ENCODE measurements at regions of chr15 and their contacts with region 1.

Region 1: DNA sequence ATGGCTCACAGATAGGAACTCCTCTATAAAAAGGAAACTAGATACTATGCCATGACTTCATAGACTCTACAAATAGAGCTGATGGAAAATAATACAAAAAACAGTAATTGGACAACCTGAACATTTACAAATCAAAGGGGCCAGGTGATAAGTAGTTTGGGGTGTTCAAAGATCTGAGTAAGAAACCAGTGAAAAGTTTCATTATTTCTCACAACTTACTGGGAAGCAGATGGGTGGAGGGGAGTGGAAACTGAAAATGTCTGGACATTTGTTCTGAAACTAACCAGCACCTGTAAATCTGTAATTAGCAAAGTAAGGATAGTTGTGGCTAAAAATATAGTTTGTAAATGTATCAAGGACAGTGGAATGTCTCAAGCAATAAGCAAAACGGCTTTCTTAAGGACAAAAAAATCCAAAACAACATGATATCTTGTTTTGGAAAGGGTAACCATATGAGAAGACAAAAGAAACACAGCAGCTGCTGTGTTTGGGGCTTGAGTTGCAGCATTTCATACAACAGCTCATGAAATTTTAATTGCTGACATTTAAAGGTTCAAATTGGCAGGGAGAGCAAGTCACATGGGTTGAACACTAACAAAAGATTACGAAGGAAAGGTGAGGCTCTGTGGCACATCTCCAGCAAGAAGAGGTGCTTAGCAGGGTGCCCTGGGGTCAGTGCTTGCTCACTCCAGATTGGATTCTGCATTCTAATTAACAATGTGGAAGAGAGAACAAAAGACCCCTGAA is 26.8 kb upstream of the THBS1 start:
- DNase-seq: peak; percentile 78
- H3K4me3 Mint-ChIP-seq: peak overlapping the region; percentile 22
- H3K27ac Mint-ChIP-seq: peak overlapping the region; percentile 50
- H3K4me1 Mint-ChIP-seq: peaks cover 39% of the 10 kb centered on the region
- H3K27me3 Mint-ChIP-seq: no peaks in the 10 kb centered on the region
- CTCF ChIP-seq: no peak

Region 2: GRCh38 chr15:39327005-39327730 is 227.0 kb before region 1 on chr15:
- CTCF ChIA-PET with region 1: no interaction called
- POLR2A ChIA-PET with region 1: no interaction called
- intact Hi-C with region 1: no loop called
- DNase-seq: no peak
- H3K4me3 Mint-ChIP-seq: no peak overlapping the region
- H3K27ac Mint-ChIP-seq: no peak overlapping the region
- H3K4me1 Mint-ChIP-seq: peaks cover 15% of the 10 kb centered on the region
- H3K27me3 Mint-ChIP-seq: no peaks in the 10 kb centered on the region
- CTCF ChIP-seq: no peak

Region 3: DNA sequence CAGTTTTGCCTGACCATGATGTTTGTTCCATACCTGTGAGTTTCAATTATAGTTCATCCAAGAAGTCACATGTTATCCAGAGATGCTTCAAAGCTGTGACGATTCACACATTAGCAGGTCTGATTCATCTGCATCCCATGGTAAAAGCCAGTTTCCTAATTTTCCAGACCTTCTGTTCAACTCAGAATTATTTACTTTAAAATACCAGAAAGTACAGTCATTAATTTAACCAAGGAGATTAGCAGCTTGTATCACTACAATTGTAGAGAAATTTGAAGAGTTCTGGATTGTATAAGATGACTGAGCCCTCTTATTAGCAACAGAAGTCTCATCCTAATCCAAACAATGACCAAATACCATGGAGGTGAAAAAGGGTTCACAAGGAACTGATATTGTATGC is 49.3 kb before region 1 on chr15:
- CTCF ChIA-PET with region 1: no interaction called
- POLR2A ChIA-PET with region 1: no interaction called
- intact Hi-C with region 1: loop called (anchors 5 kb)
- DNase-seq: peak; percentile 14
- H3K4me3 Mint-ChIP-seq: no peak overlapping the region
- H3K27ac Mint-ChIP-seq: no peak overlapping the region
- H3K4me1 Mint-ChIP-seq: peaks cover 5% of the 10 kb centered on the region
- H3K27me3 Mint-ChIP-seq: no peaks in the 10 kb centered on the region
- CTCF ChIP-seq: no peak